Mammary epithelial cell (primary cell): ENCODE measurements at regions of chr12 and their contacts with region 1.

Region 1: DNA sequence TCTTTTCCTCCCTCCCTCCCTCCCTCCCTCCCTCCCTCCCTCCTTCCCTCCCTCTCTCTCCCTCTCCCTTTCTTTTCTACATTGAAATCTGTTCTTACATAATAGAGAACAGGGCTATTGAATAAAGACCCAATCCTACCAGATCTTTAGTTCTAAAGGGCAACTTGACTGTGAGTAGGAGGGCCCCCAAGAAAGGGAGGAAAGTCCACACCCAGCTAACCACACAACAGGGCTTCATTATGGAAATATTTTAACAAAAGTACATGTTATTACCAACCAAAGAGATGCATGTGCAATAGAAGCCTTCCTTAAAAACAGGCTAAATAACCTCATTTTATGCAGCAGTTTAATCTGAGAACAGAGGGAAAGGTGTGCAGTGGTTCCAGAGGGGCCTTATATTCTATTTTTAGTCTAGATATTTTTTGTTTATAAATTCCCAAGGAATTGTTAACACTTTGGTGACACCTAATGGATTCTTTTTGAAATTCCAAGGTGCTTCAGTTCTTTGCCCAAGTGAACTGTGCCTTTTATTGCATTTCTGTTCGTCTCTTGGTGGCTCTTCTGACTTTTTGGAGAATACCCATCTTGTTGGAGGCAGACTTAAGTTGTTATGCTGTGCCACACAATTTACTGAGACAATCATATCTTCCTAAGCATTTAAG is 63.0 kb downstream of the GNS start:
- DNase-seq: no peak
- H3K4me3 ChIP-seq: no peak overlapping the region
- H3K27ac ChIP-seq: no peak overlapping the region
- H3K4me1 ChIP-seq: no peaks in the 10 kb centered on the region
- H3K27me3 ChIP-seq: no peaks in the 10 kb centered on the region
- CTCF ChIP-seq: peak; percentile 13 to 39

Region 2: GRCh38 chr12:63826006-63826585 is 870.1 kb before region 1 on chr12:
- CTCF ChIA-PET with region 1: no interaction called
- dilution Hi-C with region 1: no loop called
- in situ Hi-C with region 1: no loop called
- intact Hi-C with region 1: loop called (anchors 5 kb)
- DNase-seq: peak; percentile 52
- H3K4me3 ChIP-seq: no peak overlapping the region
- H3K27ac ChIP-seq: no peak overlapping the region
- H3K4me1 ChIP-seq: peaks cover 15% of the 10 kb centered on the region
- H3K27me3 ChIP-seq: no peaks in the 10 kb centered on the region
- CTCF ChIP-seq: peak; percentile 81 to 88

Region 3: GRCh38 chr12:64451687-64452558 is 244.3 kb before region 1 on chr12 and contains the start of gene TBK1:
- CTCF ChIA-PET with region 1: no interaction called
- dilution Hi-C with region 1: no loop called
- in situ Hi-C with region 1: no loop called
- intact Hi-C with region 1: loop called (anchors 5 kb)
- DNase-seq: peak; percentile 83
- H3K4me3 ChIP-seq: peak within 1 kb of the TSS; percentile 91 to 100 (median 98)
- H3K27ac ChIP-seq: peak within 1 kb of the TSS; percentile 98
- H3K4me1 ChIP-seq: peaks cover 17% of the 10 kb centered on the region
- H3K27me3 ChIP-seq: no peaks in the 10 kb centered on the region
- CTCF ChIP-seq: no peak
- total RNA-seq, gene TBK1: 19.9 to 20.2 TPM

Region 4: DNA sequence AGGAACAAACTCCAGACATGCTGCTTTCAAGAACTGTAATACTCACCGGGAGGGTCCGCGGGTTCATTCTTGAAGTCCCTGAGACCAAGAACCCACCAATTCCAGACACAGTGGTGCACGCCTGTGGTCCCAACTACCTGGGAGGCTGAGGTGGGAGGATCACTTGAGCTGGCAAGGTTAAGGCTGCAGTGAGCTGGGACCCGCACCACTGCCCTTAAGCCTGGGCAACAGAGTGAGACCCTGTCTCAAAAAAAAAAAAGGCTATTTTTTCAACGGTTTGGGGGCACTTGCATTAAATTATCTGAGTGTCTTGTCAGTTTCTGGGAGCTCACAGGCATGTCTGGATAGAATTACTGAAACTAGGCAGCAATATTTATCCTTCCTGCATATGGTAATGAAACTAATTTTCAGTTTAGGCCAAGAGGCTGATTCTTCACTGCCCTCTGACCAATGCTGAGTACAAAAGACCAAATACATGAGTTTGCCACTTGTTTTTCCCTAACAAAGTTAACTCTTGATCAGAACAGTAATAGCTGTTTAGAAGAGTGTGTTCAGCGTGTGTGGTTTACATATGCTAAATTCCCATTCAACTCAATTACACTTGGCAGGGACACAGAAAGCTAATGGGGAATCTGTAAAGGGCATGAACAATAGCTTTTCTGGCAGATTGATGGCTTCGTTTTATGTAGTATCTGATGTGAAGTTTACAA is 151.7 kb before region 1 on chr12:
- CTCF ChIA-PET with region 1: interaction called, 3 read pairs
- dilution Hi-C with region 1: loop called (anchors 10 kb)
- in situ Hi-C with region 1: no loop called
- intact Hi-C with region 1: loop called (anchors 1 kb)
- DNase-seq: no peak
- H3K4me3 ChIP-seq: no peak overlapping the region
- H3K27ac ChIP-seq: no peak overlapping the region
- H3K4me1 ChIP-seq: no peaks in the 10 kb centered on the region
- H3K27me3 ChIP-seq: no peaks in the 10 kb centered on the region
- CTCF ChIP-seq: no peak

Region 5: GRCh38 chr12:64551698-64552097 is 144.5 kb before region 1 on chr12:
- CTCF ChIA-PET with region 1: interaction called, 3 read pairs
- dilution Hi-C with region 1: loop called (anchors 10 kb)
- in situ Hi-C with region 1: loop called (anchors 5 kb)
- intact Hi-C with region 1: loop called (anchors 1 kb)
- DNase-seq: no peak
- H3K4me3 ChIP-seq: no peak overlapping the region
- H3K27ac ChIP-seq: no peak overlapping the region
- H3K4me1 ChIP-seq: no peaks in the 10 kb centered on the region
- H3K27me3 ChIP-seq: no peaks in the 10 kb centered on the region
- CTCF ChIP-seq: no peak

Region 6: DNA sequence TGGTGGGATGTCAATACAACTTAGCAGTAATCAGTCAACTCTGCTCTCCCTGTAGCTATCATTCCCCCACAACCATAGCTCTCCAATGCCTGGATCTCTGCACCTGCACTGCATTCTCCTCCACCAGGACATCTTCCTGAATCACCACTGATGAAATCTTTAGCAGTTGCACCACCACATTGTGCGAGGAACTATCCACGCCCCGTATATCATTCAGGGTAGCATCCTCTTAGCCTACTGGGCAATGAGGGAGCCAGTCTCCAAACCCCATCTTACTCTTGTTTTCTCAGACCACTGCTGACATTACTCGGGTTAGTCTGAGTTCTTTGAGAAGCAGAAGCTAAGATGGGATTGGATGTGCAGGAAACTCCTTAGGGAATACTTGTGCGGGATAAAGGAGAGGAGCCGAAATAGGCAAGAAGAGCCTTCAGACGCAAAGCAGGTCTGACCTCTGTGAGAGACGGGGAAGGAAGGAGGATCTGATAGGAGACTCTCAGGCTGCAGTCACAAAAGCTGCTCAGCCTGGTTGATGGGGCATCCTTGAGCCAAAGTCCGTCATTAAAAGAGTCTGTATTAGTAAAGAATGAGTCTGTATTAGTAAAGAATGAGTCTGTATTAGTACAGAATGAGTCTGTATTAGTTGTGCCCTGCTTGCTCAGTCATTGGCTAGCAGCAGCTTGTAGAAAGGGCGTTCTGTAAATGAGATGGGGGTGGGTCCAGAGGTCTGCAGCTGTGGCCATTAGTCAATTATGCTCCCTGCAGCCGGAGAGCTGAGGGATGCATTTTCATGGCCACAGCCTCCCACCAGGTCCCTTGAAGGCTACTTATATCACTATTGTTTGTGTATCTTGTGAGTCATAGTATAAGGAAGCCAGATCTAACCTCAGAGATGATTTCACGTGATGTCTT is 135.6 kb before region 1 on chr12:
- CTCF ChIA-PET with region 1: no interaction called
- dilution Hi-C with region 1: no loop called
- in situ Hi-C with region 1: loop called in 1 of 2 experiments (anchors 5 kb)
- intact Hi-C with region 1: no loop called
- DNase-seq: peak; percentile 77
- H3K4me3 ChIP-seq: no peak overlapping the region
- H3K27ac ChIP-seq: no peak overlapping the region
- H3K4me1 ChIP-seq: peaks cover 13% of the 10 kb centered on the region
- H3K27me3 ChIP-seq: no peaks in the 10 kb centered on the region
- CTCF ChIP-seq: no peak